Activated CD4-positive, alpha-beta T cell treated with anti-CD3 and anti-CD28 coated beads, Interleukin-2, amount 10 ng/mL, durations not matched to agents 24 days and 14 days (primary cell): ENCODE measurements at regions of chr19 and their contacts with region 1.

Region 1: DNA sequence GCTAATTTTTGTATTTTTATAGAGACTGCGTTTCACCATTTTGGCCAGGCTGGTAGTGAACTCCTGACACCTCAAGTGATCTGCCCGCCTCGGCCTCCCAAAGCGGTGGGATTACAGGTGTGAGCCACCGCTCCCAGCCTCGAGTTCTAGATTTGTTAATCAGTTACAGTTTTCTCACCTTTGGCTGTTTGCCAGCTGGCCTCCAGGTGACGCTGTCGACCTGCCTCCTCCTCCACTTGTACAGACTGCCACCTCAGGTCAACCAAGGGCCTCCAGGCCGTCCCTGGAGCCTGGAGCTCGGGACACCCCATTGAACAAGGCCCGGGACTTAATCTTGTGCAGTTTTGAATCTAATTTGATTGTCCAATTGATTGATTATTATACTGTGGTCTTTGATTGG is 45.5 kb downstream of the IER2 start:
- DNase-seq: peak; percentile 85
- H3K4me3 Mint-ChIP-seq: no peak overlapping the region
- H3K27ac Mint-ChIP-seq: no peak overlapping the region
- H3K4me1 Mint-ChIP-seq: peaks cover 20% of the 10 kb centered on the region
- H3K27me3 Mint-ChIP-seq: no peaks in the 10 kb centered on the region

Region 2: DNA sequence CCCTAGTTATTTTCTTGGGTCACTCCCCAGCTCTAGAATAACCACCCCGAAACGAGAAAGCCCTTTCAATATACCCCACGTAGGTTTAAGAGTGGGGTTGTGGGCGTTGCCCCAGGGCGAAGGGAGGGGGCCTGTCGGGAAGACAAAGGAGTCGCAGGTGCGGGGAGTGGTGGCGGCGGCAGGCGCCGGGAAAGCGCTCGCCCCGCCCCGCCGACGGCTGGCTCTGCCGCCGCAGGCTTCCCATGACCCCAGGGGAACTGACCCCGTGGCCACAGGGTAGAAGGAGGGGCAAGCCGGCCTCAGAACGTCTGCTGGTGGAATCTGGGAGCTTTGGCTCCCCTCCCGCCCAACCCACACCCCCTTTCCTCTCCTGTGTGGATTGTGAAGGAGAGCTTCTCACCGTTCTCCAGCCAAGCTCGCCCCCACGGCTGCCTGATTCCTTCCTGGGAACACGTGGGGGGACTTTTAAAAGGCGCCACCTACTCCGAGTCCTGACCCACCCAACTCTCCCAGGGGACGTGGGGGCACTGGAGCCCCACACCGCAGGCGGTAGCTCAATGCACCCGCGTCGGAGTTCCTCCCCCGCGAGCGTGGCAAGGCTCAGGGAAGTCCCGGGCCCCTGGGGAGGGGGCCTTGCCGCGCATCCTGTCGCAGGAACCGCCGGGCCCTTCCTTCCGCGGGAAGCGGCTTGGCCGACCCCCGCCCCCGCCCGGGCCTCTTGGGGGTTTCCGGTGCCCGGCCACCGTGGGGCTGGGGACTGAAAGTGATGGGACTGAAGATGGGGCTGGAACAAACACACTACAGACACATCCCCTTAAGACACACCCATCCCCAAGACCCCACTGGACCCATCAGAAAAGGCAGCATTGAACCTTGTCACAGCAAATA is 40.0 kb before region 1 on chr19:
- intact Hi-C with region 1: loop called (anchors 2 kb)
- DNase-seq: peak; percentile 95
- H3K4me3 Mint-ChIP-seq: peak overlapping the region; percentile 100
- H3K27ac Mint-ChIP-seq: peak overlapping the region; percentile 99
- H3K4me1 Mint-ChIP-seq: peaks cover 44% of the 10 kb centered on the region
- H3K27me3 Mint-ChIP-seq: peaks cover 2% of the 10 kb centered on the region

Region 3: GRCh38 chr19:13162518-13163314 is 33.0 kb before region 1 on chr19:
- intact Hi-C with region 1: loop called (anchors 2 kb)
- DNase-seq: peak; percentile 98
- H3K4me3 Mint-ChIP-seq: peak overlapping the region; percentile 89
- H3K27ac Mint-ChIP-seq: peak overlapping the region; percentile 95
- H3K4me1 Mint-ChIP-seq: peaks cover 57% of the 10 kb centered on the region
- H3K27me3 Mint-ChIP-seq: no peaks in the 10 kb centered on the region

Region 4: DNA sequence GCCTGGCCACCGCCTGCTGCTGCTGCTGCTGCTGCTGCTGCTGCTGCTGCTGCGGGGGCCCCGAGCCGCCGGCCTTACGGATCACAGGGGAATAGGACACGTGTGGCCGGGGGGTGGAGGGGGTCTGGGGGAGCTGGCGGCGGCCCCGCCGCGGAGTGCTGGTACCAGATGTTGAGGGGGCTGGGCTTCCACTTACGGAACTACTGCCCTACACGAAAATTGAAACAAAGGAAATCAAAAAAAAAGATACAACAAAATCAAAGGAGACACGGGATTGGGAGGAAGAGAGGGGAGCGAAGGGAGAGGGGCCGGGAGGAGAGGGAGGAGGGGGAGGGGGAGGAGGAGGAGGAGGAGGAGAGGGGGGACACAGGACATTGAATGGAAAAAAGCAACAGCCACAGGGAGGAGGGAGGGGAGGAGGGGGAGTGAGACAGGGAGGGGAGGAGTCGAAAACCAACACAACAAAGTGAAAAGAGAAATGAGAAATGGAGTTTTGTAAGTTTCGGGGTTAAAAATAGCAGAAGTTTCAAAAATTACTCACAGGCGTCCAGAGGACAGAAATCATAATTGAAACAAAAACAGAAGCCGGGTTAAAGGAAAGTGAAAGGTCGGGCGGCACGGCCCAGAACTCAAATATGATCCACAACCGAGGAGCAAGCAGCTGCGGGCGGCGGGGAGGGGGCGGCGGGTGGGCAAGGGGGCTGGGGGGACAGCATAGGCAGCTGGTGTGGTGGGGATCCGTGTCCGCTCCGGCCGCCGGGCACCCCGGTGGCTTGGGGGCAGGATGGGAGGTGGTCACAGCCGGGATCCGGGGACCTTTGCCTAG is 12.4 kb after region 1 on chr19:
- intact Hi-C with region 1: loop called (anchors 2 kb)
- DNase-seq: peak; percentile 87
- H3K4me3 Mint-ChIP-seq: peak overlapping the region; percentile 81
- H3K27ac Mint-ChIP-seq: peak overlapping the region; percentile 94
- H3K4me1 Mint-ChIP-seq: peaks cover 13% of the 10 kb centered on the region
- H3K27me3 Mint-ChIP-seq: no peaks in the 10 kb centered on the region

Region 5: GRCh38 chr19:13262450-13262849 is 66.8 kb after region 1 on chr19:
- intact Hi-C with region 1: loop called (anchors 1 kb)
- DNase-seq: peak; percentile 74
- H3K4me3 Mint-ChIP-seq: no peak overlapping the region
- H3K27ac Mint-ChIP-seq: no peak overlapping the region
- H3K4me1 Mint-ChIP-seq: peaks cover 17% of the 10 kb centered on the region
- H3K27me3 Mint-ChIP-seq: peaks cover 22% of the 10 kb centered on the region

Region 6: DNA sequence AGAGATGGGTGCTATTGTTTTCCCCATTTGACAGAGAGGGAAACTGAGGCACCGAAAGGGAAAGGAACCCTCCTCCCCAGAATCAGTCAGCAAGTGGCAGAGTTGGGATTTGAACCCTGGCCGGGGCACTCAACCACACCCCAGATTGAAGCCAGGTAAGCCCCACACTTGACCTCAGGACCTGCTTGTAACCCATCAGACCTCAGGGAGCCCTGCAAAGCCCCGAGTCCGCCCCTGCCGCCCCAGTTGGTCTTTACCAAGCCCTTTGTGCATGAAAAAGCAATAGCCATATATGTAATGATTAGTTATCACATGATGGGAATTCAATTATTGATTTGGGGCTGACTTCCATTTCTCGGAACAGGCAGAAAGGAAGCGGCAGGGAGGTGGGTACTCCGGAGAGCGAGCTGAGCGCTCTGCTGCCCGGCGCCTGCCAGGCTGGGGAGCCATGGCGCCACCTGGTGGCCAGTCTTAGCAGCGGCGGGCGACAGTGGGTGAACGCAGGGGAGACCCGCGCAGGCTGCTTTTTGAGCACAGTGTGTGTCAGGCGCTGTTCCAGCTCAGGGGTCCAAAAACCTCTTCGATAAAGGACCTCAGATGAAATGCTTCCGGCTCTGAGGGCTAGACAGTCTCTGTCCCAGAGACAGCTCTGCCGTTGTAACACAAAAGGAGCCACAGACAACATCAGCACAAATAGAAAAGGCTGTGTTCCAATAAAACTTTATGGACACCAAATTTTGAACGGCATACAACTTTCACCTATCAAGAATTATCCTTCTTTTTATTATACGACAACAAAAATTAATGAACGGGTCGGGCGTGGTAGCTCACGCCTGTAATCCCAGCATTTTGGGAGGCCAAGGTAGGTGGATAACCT is 393.5 kb after region 1 on chr19:
- intact Hi-C with region 1: loop called (anchors 10 kb)
- DNase-seq: peak; percentile 95
- H3K4me3 Mint-ChIP-seq: no peak overlapping the region
- H3K27ac Mint-ChIP-seq: no peak overlapping the region
- H3K4me1 Mint-ChIP-seq: no peaks in the 10 kb centered on the region
- H3K27me3 Mint-ChIP-seq: peaks cover 2% of the 10 kb centered on the region